ENCODE measurements at regions of chr16 and their contacts with region 1.

Region 1: GRCh38 chr16:30355144-30355894 is at the start of gene CD2BP2:
- DNase-seq: peak; percentile 93 to 99 (median 97)

Region 2: GRCh38 chr16:30407102-30407803 is 51.9 kb after region 1 on chr16 and contains the start of gene ZNF771:
- intact Hi-C with region 1: loop called (anchors 5 kb)
- DNase-seq: peak; percentile 86 to 97 (median 94)

Region 3: DNA sequence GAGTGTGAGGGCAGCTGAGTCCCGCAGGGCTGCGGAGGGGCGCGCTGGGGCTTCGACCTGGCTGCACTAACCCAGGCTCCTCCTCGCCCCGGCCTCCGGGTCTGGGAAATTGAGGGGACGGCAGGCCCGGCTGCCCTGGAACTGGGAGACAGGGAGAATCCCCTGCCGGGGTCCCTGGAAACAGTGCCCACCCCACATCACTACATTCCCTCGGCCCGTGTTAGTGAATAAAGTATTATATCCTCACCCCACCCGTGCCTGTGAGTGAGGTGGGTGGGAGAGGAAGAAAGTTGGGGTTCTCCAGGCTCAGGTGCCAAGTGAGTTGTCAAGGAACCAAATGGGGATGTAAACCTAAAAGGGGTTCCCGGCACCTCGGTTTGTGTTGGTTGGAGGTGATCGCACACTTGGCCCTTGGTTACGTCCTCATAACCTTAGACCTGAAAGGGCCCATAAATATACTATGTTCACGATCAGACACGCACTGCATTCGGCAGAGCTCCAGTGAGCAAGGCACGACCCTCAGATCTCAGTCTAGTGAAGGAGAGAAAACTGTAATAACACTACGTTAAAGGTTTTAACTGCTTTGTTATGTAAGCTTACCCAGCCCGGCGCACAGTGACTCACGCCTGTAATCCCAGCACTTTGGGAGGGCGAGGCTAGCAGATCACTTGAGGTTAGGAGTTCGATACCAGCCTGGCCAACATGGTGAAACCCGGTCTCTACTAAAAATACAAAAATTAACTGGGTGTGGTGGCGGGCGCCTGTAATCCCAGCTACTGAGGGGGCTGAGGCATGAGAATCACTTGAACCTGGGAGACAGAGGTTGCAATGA is 63.2 kb after region 1 on chr16:
- intact Hi-C with region 1: no loop called
- DNase-seq: peak in 36 of 42 donors; percentile 24 to 79 (median 50)

Region 4: DNA sequence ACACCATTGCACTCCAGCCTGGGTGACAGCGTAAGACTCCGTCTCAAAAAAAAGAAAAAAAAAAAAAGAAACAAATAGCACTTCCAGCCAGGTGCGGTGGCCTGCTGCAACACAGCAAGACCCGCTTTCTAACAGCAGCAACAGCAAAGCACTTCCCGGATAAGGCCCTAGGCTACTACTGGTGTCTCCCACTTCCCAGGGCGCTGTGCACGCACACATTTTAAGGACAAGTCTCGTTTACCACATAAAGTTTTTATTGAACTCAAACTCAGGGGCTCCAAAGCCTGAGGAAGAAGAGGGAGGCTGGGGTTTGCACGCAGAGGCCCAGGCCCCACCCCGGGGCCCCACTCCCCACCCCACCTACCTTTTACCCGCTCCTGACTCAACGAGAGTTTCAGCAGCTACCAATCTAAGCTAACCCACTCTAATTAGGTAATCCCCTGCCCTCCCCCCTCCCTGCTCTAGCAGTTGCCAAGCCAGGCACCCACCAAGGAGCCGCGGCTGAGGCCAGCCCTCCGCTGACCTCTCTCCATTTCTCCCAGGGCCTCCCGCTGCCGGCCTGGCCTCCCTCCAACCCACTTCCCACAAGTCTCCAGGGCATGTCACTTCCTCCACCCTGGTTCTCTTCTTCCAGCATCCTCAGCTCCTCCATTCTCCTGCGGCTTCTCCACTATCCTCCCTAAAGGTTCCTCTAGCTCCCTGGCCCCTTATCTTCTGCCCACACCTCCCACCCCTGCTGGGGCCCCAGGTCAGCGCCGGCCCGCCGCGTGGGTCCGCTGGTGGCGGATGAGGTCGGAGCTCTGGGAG is 168.7 kb after region 1 on chr16:
- intact Hi-C with region 1: no loop called
- DNase-seq: peak in 2 of 42 donors; percentile 20 to 30

Region 5: GRCh38 chr16:30592871-30593270 is 237.6 kb after region 1 on chr16:
- intact Hi-C with region 1: no loop called
- DNase-seq: no peak

Measured in head of caudate nucleus (tissue), 42 donors.